ENCODE measurements at regions of chr11 and their contacts with region 1.

Region 1: DNA sequence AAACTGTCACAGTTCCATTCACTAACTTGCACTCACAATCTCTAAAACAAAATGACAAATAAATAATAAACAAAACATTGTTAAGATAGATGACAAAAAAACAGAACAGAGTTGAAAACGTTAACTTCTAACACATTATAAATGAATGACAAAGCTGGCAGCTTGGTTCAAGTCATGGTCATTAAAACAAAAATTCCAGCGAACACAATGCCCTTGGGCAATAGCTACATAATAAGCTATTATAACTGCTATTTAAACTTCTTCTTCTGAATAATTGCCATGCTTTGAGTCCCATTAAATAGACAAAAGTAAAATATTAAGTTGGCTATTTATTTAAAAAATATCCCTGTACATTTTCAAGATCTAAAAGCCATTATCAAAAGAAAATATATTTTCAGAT is 54.7 kb downstream of the PICALM start:
- DNase-seq: no peak
- ATAC-seq: no peak
- H3K4me3 ChIP-seq: no peak overlapping the region
- H3K4me3 Mint-ChIP-seq: no peak overlapping the region
- H3K27ac ChIP-seq: no peak overlapping the region
- H3K27ac Mint-ChIP-seq: no peak overlapping the region
- H3K4me1 ChIP-seq: no peaks in the 10 kb centered on the region
- H3K4me1 Mint-ChIP-seq: peaks cover 19% of the 10 kb centered on the region
- H3K27me3 ChIP-seq: no peaks in the 10 kb centered on the region
- H3K27me3 Mint-ChIP-seq: no peaks in the 10 kb centered on the region
- CTCF ChIP-seq: no peak

Region 2: GRCh38 chr11:85977751-85978160 is 36.5 kb before region 1 on chr11:
- CTCF ChIA-PET with region 1: no interaction called
- POLR2A ChIA-PET with region 1: no interaction called
- intact Hi-C with region 1: loop called in 1 of 2 experiments (anchors 5 kb)
- DNase-seq: no peak
- ATAC-seq: no peak
- H3K4me3 ChIP-seq: no peak overlapping the region
- H3K4me3 Mint-ChIP-seq: no peak overlapping the region
- H3K27ac ChIP-seq: no peak overlapping the region
- H3K27ac Mint-ChIP-seq: no peak overlapping the region
- H3K4me1 ChIP-seq: no peaks in the 10 kb centered on the region
- H3K4me1 Mint-ChIP-seq: peaks cover 2% of the 10 kb centered on the region
- H3K27me3 ChIP-seq: no peaks in the 10 kb centered on the region
- H3K27me3 Mint-ChIP-seq: no peaks in the 10 kb centered on the region
- CTCF ChIP-seq: no peak

Region 3: DNA sequence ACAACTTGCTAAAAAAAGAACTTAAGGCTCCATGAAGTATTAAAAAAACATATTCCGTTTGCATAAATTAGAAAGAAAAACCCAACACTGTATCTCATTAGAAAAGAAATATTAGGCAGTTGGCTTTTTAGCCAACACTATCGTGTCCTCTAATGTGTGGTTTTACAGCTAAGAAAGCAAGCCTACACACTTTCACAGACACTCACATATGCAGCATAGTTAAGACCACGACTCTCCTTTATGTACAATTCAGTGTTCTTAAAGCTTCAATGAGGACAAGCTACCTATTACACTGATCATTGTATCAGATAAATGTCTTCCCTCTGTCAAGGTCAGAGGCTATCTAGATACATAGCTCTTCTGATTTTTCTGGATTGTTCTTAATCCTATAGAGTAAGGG is 25.4 kb before region 1 on chr11:
- CTCF ChIA-PET with region 1: interaction called, 3 read pairs
- POLR2A ChIA-PET with region 1: no interaction called
- intact Hi-C with region 1: loop called in 1 of 2 experiments (anchors 2 kb)
- DNase-seq: no peak
- ATAC-seq: no peak
- H3K4me3 ChIP-seq: no peak overlapping the region
- H3K4me3 Mint-ChIP-seq: no peak overlapping the region
- H3K27ac ChIP-seq: no peak overlapping the region
- H3K27ac Mint-ChIP-seq: peak overlapping the region; percentile 41
- H3K4me1 ChIP-seq: no peaks in the 10 kb centered on the region
- H3K4me1 Mint-ChIP-seq: peaks cover 23% of the 10 kb centered on the region
- H3K27me3 ChIP-seq: no peaks in the 10 kb centered on the region
- H3K27me3 Mint-ChIP-seq: no peaks in the 10 kb centered on the region
- CTCF ChIP-seq: no peak

Region 4: GRCh38 chr11:86062719-86063118 is 48.5 kb after region 1 on chr11:
- CTCF ChIA-PET with region 1: no interaction called
- POLR2A ChIA-PET with region 1: no interaction called
- intact Hi-C with region 1: no loop called
- DNase-seq: peak in 2 of 9 experiments; percentile 41 to 68
- ATAC-seq: peak; percentile 43
- H3K4me3 ChIP-seq: peak overlapping the region in 1 of 2 experiments; percentile 33
- H3K4me3 Mint-ChIP-seq: peak overlapping the region; percentile 68
- H3K27ac ChIP-seq: peak overlapping the region; percentile 11 to 93
- H3K27ac Mint-ChIP-seq: peak overlapping the region; percentile 82
- H3K4me1 ChIP-seq: peaks cover 74% of the 10 kb centered on the region
- H3K4me1 Mint-ChIP-seq: peaks cover 83% of the 10 kb centered on the region
- H3K27me3 ChIP-seq: no peaks in the 10 kb centered on the region
- H3K27me3 Mint-ChIP-seq: no peaks in the 10 kb centered on the region
- CTCF ChIP-seq: no peak

Measured in CD8-positive, alpha-beta T cell (primary cell).